ENCODE measurements at regions of chr6 and their contacts with region 1.

Region 1: DNA sequence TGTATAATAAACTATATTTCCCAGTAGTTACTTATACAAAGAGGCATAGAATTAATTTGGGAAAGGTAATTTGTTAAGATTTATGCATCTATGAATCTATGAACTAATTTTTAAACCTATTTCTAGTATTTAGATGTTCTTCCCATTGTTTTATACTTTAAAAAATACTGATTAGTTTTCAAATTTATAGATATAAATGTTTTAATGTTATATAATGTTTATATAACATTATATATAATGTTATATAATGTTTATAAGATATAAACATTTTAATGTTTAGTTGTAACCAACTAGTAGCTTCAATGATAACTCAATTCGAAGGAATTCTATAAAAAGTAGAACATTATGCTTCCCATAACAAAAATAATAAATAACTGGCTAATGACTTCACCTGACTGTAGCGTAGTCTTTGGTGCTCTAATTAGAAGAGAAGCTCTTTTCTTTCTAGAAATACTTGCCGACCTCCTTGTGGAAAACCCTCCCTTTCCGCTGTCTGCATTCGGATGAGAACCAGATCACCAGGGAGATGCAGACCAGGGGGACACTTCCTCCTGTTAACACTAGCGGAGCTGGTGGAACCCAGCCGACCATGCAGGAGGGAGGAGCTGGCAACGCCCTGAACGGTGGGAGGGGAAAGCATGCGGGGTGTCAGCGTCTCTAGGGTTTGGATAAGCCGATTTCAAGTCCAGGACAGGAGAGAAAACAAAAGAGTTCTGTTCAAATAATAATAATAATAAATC is 158.4 kb downstream of the OR2B2 start:
- DNase-seq: peak; percentile 24 to 79 (median 64)
- ATAC-seq: no peak
- H3K4me3 ChIP-seq: peak overlapping the region; percentile 69 to 84
- H3K4me3 Mint-ChIP-seq: peak overlapping the region; percentile 86
- H3K27ac ChIP-seq: peak overlapping the region in 1 of 2 experiments; percentile 25
- H3K27ac Mint-ChIP-seq: peak overlapping the region; percentile 86
- H3K4me1 ChIP-seq: peaks cover 12% of the 10 kb centered on the region
- H3K4me1 Mint-ChIP-seq: peaks cover 34% of the 10 kb centered on the region
- H3K27me3 ChIP-seq: peaks cover 0 to 2% of the 10 kb centered on the region in 2 experiments
- H3K27me3 Mint-ChIP-seq: no peaks in the 10 kb centered on the region
- CTCF ChIP-seq: no peak

Region 2: DNA sequence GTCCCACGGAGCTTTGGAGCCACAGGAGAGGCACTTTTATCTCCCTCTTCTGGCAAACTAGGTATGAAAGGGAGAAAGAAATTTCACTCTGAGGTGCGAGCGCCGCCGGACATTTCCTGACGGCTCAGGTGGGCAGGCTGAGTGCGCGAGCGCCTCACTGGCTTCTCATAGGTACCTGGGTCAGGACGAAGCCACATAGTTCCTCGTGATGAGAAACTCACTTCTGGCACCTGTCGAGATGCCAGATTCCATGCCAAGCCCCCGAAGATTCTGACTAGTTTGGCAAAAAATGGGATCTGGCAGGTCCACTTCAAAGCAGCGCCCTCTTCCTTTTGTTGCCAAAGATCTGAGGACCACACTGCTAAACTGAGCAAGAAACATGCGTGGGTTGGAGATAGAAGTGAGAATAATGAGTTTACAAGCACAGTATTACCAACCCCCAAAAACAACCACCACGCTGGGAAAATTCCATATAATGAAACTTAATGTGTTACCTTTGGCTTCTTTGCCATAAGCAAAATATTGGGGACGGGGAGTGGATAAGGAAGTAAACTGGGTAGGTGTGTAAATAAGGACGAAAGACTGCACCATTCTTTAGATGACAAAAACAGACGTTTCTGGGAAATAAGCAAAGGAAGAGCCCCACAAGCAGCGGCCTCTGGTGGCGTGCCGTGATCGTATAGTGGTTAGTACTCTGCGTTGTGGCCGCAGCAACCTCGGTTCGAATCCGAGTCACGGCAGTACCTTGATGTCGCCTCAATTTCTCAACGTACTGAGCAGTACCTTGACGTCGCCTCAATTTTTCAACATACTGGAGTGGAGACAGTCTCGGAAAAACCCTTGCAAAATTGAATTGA is 596.2 kb before region 1 on chr6:
- CTCF ChIA-PET with region 1: interaction called, 4 read pairs
- POLR2A ChIA-PET with region 1: interaction called, 3 read pairs
- intact Hi-C with region 1: loop called (anchors 1 to 5 kb)
- DNase-seq: peak; percentile 72 to 91 (median 86)
- ATAC-seq: peak; percentile 75
- H3K4me3 ChIP-seq: peak overlapping the region; percentile 55 to 60
- H3K4me3 Mint-ChIP-seq: peak overlapping the region; percentile 85
- H3K27ac ChIP-seq: peak overlapping the region; percentile 18 to 23
- H3K27ac Mint-ChIP-seq: peak overlapping the region; percentile 87
- H3K4me1 ChIP-seq: peaks cover 13% of the 10 kb centered on the region
- H3K4me1 Mint-ChIP-seq: peaks cover 38% of the 10 kb centered on the region
- H3K27me3 ChIP-seq: no peaks in the 10 kb centered on the region
- H3K27me3 Mint-ChIP-seq: no peaks in the 10 kb centered on the region
- CTCF ChIP-seq: peak; percentile 48

Region 3: DNA sequence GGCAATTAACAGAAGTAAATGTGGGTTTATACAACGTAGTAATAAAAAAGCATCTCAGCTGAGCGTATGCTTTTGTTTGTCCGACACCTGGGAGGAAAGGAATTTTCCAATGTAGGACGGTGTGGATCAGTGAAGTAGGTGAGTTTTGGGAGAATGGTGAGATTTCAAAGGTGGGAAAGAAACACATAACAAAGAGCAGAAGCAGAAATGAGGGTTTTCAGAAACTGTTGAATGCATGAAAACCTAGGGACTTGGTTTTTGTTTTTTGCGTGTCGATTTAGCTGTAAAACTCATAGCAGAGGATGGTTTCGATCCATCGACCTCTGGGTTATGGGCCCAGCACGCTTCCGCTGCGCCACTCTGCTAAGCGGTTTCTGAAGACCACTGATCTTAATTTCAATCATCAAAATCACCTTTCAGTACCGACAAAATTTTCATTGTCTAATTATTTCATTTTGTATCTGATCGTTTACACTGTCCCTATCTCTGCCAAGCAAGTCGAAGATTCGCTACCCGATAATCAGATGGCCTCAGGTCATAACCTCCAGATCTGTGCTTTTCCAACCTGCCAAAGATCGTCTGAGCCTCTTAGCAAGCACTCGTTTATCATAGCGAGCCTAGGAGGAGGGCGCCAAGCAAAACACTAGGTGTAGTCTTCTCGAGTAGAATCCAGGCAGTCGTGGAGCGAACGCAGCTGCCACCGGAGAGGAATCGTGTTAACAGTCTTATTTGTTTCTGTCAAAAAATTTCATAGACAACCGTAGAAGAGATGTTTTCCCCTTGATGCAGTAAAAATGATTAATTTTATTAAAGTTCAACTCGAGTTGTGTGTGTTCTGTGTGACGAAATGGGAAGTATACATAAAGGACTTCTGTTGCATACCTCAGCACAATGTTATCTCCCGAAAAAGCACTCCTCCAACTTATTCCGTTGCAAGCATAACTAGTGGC is 420.9 kb before region 1 on chr6:
- CTCF ChIA-PET with region 1: no interaction called
- POLR2A ChIA-PET with region 1: no interaction called
- intact Hi-C with region 1: loop called (anchors 5 kb)
- DNase-seq: peak in 8 of 9 experiments; percentile 12 to 78 (median 60)
- ATAC-seq: peak; percentile 86
- H3K4me3 ChIP-seq: peak overlapping the region; percentile 53
- H3K4me3 Mint-ChIP-seq: peak overlapping the region; percentile 87
- H3K27ac ChIP-seq: no peak overlapping the region
- H3K27ac Mint-ChIP-seq: peak overlapping the region; percentile 82
- H3K4me1 ChIP-seq: no peaks in the 10 kb centered on the region
- H3K4me1 Mint-ChIP-seq: peaks cover 15% of the 10 kb centered on the region
- H3K27me3 ChIP-seq: peaks cover 0 to 4% of the 10 kb centered on the region in 2 experiments
- H3K27me3 Mint-ChIP-seq: peaks cover 21% of the 10 kb centered on the region
- CTCF ChIP-seq: no peak

Region 4: DNA sequence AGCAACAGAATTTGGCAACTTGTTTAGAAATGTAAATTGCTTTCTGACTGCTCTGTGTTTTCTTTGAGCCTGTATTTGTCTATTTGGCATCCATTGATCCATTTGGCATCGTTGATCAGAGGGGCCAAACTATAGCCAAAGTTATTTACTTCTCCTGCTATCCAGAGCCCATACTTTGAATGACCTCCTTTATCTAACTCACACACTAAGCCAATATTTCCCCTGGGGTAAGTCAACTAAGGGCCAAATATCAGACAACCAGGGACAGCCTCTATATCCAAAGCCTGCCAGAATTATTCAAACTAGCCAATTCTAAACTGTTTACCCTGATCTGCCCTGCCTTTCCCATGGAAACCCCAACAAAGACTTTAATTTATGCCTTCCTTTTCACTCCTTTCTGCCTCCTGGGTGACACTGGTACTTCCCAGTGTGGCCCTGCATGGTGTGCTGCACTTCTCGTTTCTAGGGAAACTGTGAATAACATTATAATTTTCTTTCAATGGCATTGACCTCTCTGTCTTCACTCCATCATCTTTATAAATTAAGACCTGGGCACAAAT is 261.1 kb before region 1 on chr6:
- CTCF ChIA-PET with region 1: no interaction called
- POLR2A ChIA-PET with region 1: no interaction called
- intact Hi-C with region 1: no loop called
- DNase-seq: no peak
- ATAC-seq: no peak
- H3K4me3 ChIP-seq: no peak overlapping the region
- H3K4me3 Mint-ChIP-seq: no peak overlapping the region
- H3K27ac ChIP-seq: no peak overlapping the region
- H3K27ac Mint-ChIP-seq: no peak overlapping the region
- H3K4me1 ChIP-seq: peaks cover 11% of the 10 kb centered on the region
- H3K4me1 Mint-ChIP-seq: peaks cover 12% of the 10 kb centered on the region
- H3K27me3 ChIP-seq: peaks cover 22 to 26% of the 10 kb centered on the region in 2 experiments
- H3K27me3 Mint-ChIP-seq: peaks cover 30% of the 10 kb centered on the region
- CTCF ChIP-seq: no peak

Region 5: DNA sequence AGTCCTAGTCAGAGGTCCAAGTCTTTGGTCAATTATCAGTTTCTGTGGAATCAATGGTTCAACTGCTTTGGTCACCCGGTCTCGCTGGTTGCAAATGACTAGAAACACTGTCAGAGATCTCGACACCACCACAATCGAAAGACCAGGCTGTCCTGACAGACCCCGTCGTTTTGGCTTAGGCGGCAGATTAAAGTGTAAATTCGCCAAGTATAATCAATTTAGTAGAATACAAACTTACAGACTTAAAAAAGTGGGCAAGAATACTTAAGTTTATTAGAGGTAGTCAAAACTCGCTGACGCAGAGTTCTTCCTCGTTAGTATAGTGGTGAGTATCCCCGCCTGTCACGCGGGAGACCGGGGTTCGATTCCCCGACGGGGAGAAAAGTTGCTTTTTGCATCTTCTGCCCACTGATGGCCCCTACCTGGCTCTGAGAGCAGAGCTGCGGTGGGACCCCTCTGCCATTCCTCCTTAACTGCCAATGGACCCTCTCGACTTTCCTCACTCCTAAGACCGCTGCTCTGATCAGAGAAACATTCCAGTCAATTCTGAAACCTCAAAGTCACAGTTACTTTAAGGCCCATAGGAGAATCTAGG is 250.3 kb before region 1 on chr6:
- CTCF ChIA-PET with region 1: interaction called, 13 read pairs
- POLR2A ChIA-PET with region 1: no interaction called
- intact Hi-C with region 1: loop called (anchors 2 kb)
- DNase-seq: peak; percentile 58 to 90 (median 79)
- ATAC-seq: peak; percentile 62
- H3K4me3 ChIP-seq: peak overlapping the region; percentile 61 to 70
- H3K4me3 Mint-ChIP-seq: peak overlapping the region; percentile 94
- H3K27ac ChIP-seq: peak overlapping the region; percentile 34 to 46
- H3K27ac Mint-ChIP-seq: peak overlapping the region; percentile 90
- H3K4me1 ChIP-seq: peaks cover 11% of the 10 kb centered on the region
- H3K4me1 Mint-ChIP-seq: peaks cover 38% of the 10 kb centered on the region
- H3K27me3 ChIP-seq: peaks cover 0 to 7% of the 10 kb centered on the region in 2 experiments
- H3K27me3 Mint-ChIP-seq: peaks cover 4% of the 10 kb centered on the region
- CTCF ChIP-seq: no peak

Region 6: GRCh38 chr6:27742833-27743573 is 10.8 kb before region 1 on chr6:
- CTCF ChIA-PET with region 1: interaction called, 9 read pairs
- POLR2A ChIA-PET with region 1: interaction called, 4 read pairs
- intact Hi-C with region 1: loop called in 1 of 2 experiments (anchors 1 kb)
- DNase-seq: no peak
- ATAC-seq: no peak
- H3K4me3 ChIP-seq: no peak overlapping the region
- H3K4me3 Mint-ChIP-seq: no peak overlapping the region
- H3K27ac ChIP-seq: no peak overlapping the region
- H3K27ac Mint-ChIP-seq: no peak overlapping the region
- H3K4me1 ChIP-seq: no peaks in the 10 kb centered on the region
- H3K4me1 Mint-ChIP-seq: peaks cover 2% of the 10 kb centered on the region
- H3K27me3 ChIP-seq: peaks cover 6 to 13% of the 10 kb centered on the region in 2 experiments
- H3K27me3 Mint-ChIP-seq: peaks cover 29% of the 10 kb centered on the region
- CTCF ChIP-seq: no peak

Region 7: GRCh38 chr6:27816906-27817305 is 63.1 kb after region 1 on chr6:
- CTCF ChIA-PET with region 1: no interaction called
- POLR2A ChIA-PET with region 1: no interaction called
- intact Hi-C with region 1: no loop called
- DNase-seq: no peak
- ATAC-seq: no peak
- H3K4me3 ChIP-seq: no peak overlapping the region
- H3K4me3 Mint-ChIP-seq: no peak overlapping the region
- H3K27ac ChIP-seq: no peak overlapping the region
- H3K27ac Mint-ChIP-seq: no peak overlapping the region
- H3K4me1 ChIP-seq: peaks cover 6% of the 10 kb centered on the region
- H3K4me1 Mint-ChIP-seq: peaks cover 15% of the 10 kb centered on the region
- H3K27me3 ChIP-seq: no peaks in the 10 kb centered on the region
- H3K27me3 Mint-ChIP-seq: no peaks in the 10 kb centered on the region
- CTCF ChIP-seq: no peak

Region 8: DNA sequence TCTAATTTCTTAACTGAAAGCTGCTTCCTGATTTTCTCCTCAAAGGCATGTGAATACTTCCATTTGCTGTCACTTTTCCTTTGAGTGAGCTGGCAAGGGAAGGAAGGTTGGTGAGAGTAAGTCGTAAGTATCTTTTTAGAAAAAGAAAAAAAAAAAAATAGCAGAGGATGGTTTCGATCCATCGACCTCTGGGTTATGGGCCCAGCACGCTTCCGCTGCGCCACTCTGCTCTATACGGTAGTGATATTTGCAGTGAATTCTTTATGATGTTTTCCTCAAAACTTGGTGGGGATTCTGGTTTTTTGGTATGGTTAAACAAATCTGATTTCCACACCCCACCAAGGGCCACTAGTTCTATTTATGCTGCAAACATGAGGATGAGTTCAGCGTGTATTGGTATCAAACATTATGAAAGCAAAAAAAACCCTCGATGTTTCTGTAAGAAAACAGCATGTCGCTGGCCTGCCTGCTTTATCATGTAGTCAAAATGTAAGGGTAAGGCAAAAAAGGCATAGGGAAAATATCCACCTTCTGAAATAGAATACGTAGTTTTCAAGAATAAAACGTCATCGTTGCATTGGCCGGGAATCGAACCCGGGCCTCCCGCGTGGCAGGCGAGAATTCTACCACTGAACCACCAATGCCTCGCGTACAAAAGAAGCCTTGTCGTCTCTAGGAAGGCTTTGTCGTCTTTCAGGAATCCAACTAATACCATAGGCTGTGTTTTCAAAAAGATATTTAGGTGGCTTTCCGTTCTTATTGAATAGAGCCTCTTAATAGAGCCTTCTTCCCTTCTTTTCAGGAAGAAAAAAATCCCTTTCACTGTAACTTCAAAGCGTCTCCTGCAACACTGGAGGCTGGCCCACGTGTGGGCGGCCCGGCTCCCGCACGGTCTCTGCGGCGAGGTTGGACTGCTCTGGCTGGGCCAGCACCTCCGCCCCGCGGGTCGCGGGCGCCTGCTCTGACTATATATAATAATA is 148.8 kb after region 1 on chr6:
- CTCF ChIA-PET with region 1: no interaction called
- POLR2A ChIA-PET with region 1: no interaction called
- intact Hi-C with region 1: loop called in 1 of 2 experiments (anchors 2 kb)
- DNase-seq: peak; percentile 83 to 95 (median 91)
- ATAC-seq: peak; percentile 80
- H3K4me3 ChIP-seq: peak overlapping the region; percentile 61
- H3K4me3 Mint-ChIP-seq: peak overlapping the region; percentile 88
- H3K27ac ChIP-seq: peak overlapping the region; percentile 69 to 89
- H3K27ac Mint-ChIP-seq: peak overlapping the region; percentile 97
- H3K4me1 ChIP-seq: peaks cover 4% of the 10 kb centered on the region
- H3K4me1 Mint-ChIP-seq: peaks cover 5% of the 10 kb centered on the region
- H3K27me3 ChIP-seq: no peaks in the 10 kb centered on the region
- H3K27me3 Mint-ChIP-seq: peaks cover 8% of the 10 kb centered on the region
- CTCF ChIP-seq: no peak

Region 9: GRCh38 chr6:28060405-28060804 is 306.6 kb after region 1 on chr6:
- CTCF ChIA-PET with region 1: no interaction called
- POLR2A ChIA-PET with region 1: no interaction called
- intact Hi-C with region 1: no loop called
- DNase-seq: no peak
- ATAC-seq: no peak
- H3K4me3 ChIP-seq: no peak overlapping the region
- H3K4me3 Mint-ChIP-seq: no peak overlapping the region
- H3K27ac ChIP-seq: no peak overlapping the region
- H3K27ac Mint-ChIP-seq: no peak overlapping the region
- H3K4me1 ChIP-seq: no peaks in the 10 kb centered on the region
- H3K4me1 Mint-ChIP-seq: no peaks in the 10 kb centered on the region
- H3K27me3 ChIP-seq: peaks cover 0 to 4% of the 10 kb centered on the region in 2 experiments
- H3K27me3 Mint-ChIP-seq: peaks cover 33% of the 10 kb centered on the region
- CTCF ChIP-seq: no peak

Measured in CD8-positive, alpha-beta T cell (primary cell).